Dendritic cell treated with granulocyte-macrophage colony-stimulating factor and Interleukin-4, amounts not matched to agents 40 ng/mL and 50 ng/mL, for 4 days (primary cell): ENCODE measurements at regions of chr3 and their contacts with region 1.

Region 1: DNA sequence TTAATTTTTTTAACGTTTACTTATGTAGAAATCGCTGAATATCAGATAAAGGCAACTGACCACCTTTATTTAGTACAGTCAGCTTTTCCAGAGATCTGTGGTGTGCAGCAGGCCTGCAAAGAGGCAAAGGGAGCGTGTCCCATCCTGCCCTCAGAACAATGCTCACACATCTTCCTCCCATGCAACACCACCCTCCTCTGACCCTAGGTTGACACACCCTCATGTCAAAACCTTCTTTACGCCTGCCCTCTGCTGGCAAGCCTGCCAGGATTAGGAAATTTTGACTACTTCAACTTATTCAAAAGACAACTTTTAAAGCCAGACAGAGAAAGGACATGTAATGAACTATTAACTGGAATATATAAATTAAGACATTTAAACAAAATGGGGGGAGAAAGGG is 513.7 kb downstream of the FOXP1 start:
- H3K4me3 Mint-ChIP-seq: no peak overlapping the region
- H3K27ac Mint-ChIP-seq: no peak overlapping the region
- H3K4me1 Mint-ChIP-seq: peaks cover 22% of the 10 kb centered on the region
- H3K27me3 Mint-ChIP-seq: peaks cover 2% of the 10 kb centered on the region

Region 2: DNA sequence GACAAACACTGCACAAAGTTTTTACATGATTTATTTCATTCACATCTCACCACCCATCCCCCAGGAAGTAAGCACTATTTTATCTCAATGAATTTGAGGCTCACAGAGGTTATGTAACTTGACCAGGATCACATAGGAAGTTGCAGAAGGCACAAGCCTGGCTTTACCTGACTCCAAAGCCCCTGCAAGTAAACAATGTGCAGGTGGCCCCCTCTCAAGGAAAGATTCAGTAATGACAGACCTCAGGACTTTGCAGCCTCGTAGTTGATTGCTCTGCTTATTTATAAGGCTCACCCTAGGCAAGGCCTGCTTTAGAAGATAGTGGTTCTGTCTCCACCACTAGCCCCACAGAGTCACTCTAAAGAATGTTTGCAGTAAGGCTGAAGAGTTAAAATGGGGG is 677.6 kb before region 1 on chr3:
- intact Hi-C with region 1: no loop called
- H3K4me3 Mint-ChIP-seq: no peak overlapping the region
- H3K27ac Mint-ChIP-seq: no peak overlapping the region
- H3K4me1 Mint-ChIP-seq: no peaks in the 10 kb centered on the region
- H3K27me3 Mint-ChIP-seq: no peaks in the 10 kb centered on the region

Region 3: DNA sequence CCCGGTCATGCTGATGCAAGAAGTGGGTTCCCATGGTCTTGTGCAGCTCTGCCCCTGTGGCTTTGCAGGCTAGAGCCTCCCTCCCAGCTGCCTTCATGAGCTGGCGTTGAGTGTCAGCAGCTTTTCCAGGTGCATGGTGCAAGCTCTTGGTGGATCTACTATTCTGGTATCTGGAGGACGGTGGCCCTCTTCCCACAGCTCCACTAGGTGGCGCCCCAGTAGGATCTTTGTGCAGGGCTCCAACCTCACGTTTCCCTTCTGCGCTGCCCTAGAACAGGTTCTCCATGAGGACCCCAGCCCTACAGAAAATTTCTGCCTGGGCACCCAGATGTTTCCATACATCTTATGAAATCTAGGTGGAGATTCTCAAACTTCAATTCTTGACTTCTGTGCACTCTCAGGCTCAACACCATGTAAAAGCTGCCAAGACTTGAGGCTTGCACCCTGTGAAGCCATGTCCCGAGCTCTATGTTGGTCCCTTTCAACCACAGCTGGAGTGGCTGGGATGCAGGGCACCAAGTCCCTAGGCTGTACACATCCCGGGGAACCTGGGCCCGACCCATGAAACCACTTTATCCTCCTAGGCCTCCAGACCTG is 519.0 kb before region 1 on chr3:
- intact Hi-C with region 1: loop called (anchors 5 kb)
- H3K4me3 Mint-ChIP-seq: no peak overlapping the region
- H3K27ac Mint-ChIP-seq: no peak overlapping the region
- H3K4me1 Mint-ChIP-seq: no peaks in the 10 kb centered on the region
- H3K27me3 Mint-ChIP-seq: no peaks in the 10 kb centered on the region

Region 4: DNA sequence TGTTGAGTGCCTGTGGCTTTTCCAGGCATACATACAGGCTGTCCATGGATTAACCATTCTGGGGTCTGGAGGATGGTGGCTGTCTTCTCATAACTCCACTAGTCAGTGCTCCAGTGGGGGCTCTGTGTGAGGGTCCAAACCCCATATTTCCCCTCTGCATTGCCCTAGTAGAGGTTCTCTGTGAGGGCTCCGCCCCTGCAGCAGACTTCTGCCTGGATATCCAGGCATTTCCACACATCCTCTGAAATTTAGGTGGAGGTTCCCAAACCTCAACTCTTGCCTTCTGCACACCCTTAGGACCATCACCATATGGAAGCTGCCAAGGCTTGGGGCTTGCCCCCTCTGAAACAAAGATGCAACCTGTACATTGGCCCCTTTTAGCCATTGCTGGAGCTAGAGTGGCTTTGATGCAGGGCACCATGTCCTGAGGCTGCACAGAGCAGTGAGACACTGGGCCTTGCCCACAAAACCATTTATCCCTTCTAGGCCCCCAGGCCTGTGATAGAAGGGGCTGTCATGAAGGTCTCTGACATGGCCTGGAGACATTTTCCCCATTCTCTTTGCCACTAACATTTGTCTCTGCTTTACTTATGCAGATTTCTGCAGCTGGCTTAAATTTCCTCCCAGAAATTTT is 357.2 kb before region 1 on chr3:
- intact Hi-C with region 1: no loop called
- H3K4me3 Mint-ChIP-seq: no peak overlapping the region
- H3K27ac Mint-ChIP-seq: no peak overlapping the region
- H3K4me1 Mint-ChIP-seq: no peaks in the 10 kb centered on the region
- H3K27me3 Mint-ChIP-seq: no peaks in the 10 kb centered on the region

Region 5: DNA sequence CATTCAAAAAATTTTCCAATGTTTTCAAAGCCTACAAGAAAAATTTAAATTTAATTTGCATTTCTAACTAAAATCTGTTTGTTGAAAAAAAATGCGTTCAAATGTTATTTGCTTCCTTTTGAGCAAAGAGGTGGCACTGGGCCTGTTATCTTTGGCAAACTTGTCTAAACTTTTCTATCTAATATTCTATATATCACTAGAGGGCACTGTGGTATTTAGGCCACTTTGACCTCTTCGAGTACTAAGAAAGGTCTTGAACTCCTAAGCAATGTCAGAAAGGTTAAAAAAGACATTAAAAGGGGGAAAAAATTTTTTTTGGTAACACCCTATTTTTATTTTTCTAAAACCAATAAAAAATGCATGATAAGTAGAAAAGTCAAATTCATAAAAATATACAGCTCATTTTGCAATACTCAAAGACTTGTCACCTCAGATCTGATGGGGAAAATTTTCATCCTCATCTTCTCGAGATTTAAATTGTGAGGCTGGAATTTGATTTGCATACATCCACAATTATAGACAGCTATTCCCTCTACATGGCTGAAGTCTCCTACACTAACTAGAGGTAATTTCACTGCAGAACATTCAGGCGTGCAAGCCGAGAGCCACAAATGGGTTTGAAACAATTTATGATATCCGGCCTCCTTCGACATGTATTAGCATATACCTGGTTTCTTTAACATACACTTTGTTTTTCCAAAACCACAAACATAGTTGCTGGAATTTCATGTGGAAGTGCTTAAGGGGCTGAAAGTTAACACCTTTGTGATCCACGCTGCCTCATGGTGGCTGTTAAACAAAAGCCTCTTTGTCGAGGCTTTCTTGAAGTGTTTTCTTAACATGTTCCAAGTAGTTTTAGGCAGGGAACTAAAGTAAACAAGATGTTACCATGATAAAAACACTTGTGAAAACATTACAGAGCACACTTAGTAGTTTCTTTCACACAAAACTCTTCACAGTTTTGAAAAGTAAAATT is 62.7 kb before region 1 on chr3:
- intact Hi-C with region 1: loop called (anchors 1 kb)
- H3K4me3 Mint-ChIP-seq: no peak overlapping the region
- H3K27ac Mint-ChIP-seq: no peak overlapping the region
- H3K4me1 Mint-ChIP-seq: peaks cover 6% of the 10 kb centered on the region
- H3K27me3 Mint-ChIP-seq: no peaks in the 10 kb centered on the region